ENCODE measurements at regions of chr6 and their contacts with region 1.

Region 1: GRCh38 chr6:106799008-106799894 is 169.9 kb downstream of the QRSL1 start:
- DNase-seq: peak; percentile 87
- H3K4me3 Mint-ChIP-seq: peak overlapping the region; percentile 43
- H3K27ac Mint-ChIP-seq: peak overlapping the region; percentile 92
- H3K4me1 Mint-ChIP-seq: peaks cover 44% of the 10 kb centered on the region
- H3K27me3 Mint-ChIP-seq: no peaks in the 10 kb centered on the region
- CTCF ChIP-seq: no peak

Region 2: GRCh38 chr6:106746660-106747059 is 52.6 kb before region 1 on chr6:
- CTCF ChIA-PET with region 1: interaction called, 4 read pairs
- intact Hi-C with region 1: loop called (anchors 2 kb)
- DNase-seq: peak; percentile 59
- H3K4me3 Mint-ChIP-seq: peak overlapping the region; percentile 27
- H3K27ac Mint-ChIP-seq: peak overlapping the region; percentile 89
- H3K4me1 Mint-ChIP-seq: peaks cover 88% of the 10 kb centered on the region
- H3K27me3 Mint-ChIP-seq: no peaks in the 10 kb centered on the region
- CTCF ChIP-seq: no peak

Region 3: GRCh38 chr6:106858653-106859092 is 59.4 kb after region 1 on chr6:
- CTCF ChIA-PET with region 1: no interaction called
- intact Hi-C with region 1: loop called (anchors 2 kb)
- DNase-seq: peak; percentile 77
- H3K4me3 Mint-ChIP-seq: no peak overlapping the region
- H3K27ac Mint-ChIP-seq: peak overlapping the region; percentile 73
- H3K4me1 Mint-ChIP-seq: peaks cover 35% of the 10 kb centered on the region
- H3K27me3 Mint-ChIP-seq: no peaks in the 10 kb centered on the region
- CTCF ChIP-seq: no peak

Region 4: DNA sequence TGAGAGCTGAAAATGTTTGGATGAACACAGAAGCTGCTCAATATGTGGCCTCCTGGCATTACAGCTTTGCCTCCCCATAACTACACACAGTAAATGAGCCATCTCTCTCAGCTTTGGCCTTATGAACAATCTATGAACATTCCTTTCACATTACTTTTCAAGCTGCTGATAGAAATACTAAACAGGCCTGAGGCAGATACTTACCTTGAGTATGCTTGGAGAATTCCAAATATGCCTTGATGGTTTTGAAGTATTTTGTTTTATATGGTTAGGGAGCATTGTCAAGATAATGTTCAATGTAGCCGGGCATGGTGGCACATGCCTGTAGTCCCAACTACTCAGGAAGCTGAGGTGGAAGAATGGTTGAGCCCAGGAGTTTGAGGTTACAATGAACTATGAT is 70.8 kb after region 1 on chr6:
- CTCF ChIA-PET with region 1: interaction called, 5 read pairs
- intact Hi-C with region 1: loop called (anchors 1 kb)
- DNase-seq: peak; percentile 47
- H3K4me3 Mint-ChIP-seq: no peak overlapping the region
- H3K27ac Mint-ChIP-seq: peak overlapping the region; percentile 68
- H3K4me1 Mint-ChIP-seq: peaks cover 52% of the 10 kb centered on the region
- H3K27me3 Mint-ChIP-seq: no peaks in the 10 kb centered on the region
- CTCF ChIP-seq: no peak

Region 5: DNA sequence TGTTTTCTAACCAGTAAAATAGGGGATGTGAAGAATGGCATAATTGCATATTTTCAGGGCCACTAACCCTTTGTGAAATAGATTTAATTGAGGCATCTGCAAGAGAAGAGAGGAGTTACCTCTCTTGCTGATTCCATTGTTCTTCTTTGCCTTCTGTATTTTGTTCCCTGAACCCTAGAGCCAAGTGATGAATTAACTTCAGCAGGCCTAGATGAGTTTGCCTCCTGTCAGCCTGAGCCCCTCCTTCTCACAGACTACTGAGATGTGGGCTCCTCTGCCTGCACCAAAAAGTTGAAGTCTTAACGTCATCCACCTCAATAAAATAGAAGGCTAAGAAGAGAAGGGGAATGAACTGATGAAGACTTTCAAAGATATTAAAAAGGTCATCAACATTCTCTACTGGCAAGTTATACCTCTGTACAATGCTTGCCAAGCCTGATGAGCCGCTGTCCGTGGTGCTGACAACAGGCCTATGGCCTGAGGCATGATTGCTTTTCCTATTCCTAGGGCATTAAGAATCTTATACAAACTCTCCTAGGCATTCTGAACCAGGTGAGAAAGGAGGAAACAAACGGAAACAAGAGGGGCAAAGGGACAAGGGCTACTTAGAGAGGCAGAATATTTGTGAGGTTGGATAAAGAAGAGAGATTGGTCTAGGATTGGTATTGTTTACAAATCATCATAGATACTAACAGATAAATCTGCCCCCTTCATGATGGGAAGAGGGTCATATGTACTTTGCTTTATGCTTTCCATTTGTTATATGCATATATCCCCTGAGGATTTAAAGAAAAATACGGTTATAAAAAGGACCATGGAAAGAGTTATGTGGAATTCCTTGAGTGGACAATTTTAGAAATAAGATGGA is 128.5 kb after region 1 on chr6:
- CTCF ChIA-PET with region 1: no interaction called
- intact Hi-C with region 1: loop called (anchors 1 kb)
- DNase-seq: peak; percentile 79
- H3K4me3 Mint-ChIP-seq: no peak overlapping the region
- H3K27ac Mint-ChIP-seq: no peak overlapping the region
- H3K4me1 Mint-ChIP-seq: peaks cover 23% of the 10 kb centered on the region
- H3K27me3 Mint-ChIP-seq: no peaks in the 10 kb centered on the region
- CTCF ChIP-seq: no peak

Region 6: DNA sequence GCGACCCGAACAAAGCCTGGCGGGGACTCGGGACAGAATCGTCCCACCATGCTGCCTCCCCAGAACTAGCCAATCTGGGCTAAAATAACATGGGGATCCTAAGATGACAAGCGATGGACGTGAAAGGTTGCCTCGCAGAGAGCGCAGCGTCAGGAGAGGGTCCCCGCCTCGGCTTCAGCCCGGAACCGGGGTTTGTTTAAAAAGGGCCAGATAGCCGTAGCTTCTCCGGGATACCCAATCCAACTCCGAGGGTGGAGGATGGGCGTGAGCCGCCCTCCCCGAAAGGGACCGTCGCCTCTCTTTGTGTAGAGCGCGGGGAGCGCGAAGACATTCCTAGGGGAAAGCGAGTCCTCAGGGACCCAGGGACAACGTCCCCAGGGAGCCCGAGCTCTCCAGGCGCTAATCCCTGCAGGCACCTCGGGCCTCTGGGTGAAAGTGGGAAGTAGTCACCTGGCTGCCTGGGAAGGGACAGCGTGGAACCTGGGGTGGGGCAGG is 174.6 kb after region 1 on chr6:
- CTCF ChIA-PET with region 1: interaction called, 6 read pairs
- intact Hi-C with region 1: loop called (anchors 2 kb)
- DNase-seq: peak; percentile 50
- H3K4me3 Mint-ChIP-seq: peak overlapping the region; percentile 86
- H3K27ac Mint-ChIP-seq: peak overlapping the region; percentile 94
- H3K4me1 Mint-ChIP-seq: peaks cover 16% of the 10 kb centered on the region
- H3K27me3 Mint-ChIP-seq: no peaks in the 10 kb centered on the region
- CTCF ChIP-seq: no peak

Region 7: DNA sequence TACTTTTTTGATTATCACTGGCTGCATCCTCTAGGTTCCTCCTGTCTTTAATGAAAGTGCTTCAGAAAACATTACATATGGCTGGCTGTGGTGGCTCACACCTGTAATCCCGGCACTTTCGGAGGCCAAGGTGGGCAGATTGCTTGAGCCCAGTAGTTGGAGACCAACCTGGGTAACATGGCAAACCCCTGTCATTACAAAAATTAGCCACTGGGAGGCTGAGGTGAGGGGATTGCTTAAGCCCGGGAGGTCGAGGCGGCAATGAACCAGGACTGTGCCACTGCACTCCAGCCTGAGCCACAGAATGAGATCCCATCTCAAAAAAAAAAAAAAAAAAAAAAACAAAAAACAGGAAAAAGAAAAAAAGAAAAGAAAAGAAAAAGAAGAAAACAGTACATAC is 280.8 kb after region 1 on chr6:
- CTCF ChIA-PET with region 1: no interaction called
- intact Hi-C with region 1: no loop called
- DNase-seq: peak; percentile 12
- H3K4me3 Mint-ChIP-seq: no peak overlapping the region
- H3K27ac Mint-ChIP-seq: no peak overlapping the region
- H3K4me1 Mint-ChIP-seq: no peaks in the 10 kb centered on the region
- H3K27me3 Mint-ChIP-seq: no peaks in the 10 kb centered on the region
- CTCF ChIP-seq: no peak